Panc1 (cell line): ENCODE measurements at regions of chr7 and their contacts with region 1.

Region 1: DNA sequence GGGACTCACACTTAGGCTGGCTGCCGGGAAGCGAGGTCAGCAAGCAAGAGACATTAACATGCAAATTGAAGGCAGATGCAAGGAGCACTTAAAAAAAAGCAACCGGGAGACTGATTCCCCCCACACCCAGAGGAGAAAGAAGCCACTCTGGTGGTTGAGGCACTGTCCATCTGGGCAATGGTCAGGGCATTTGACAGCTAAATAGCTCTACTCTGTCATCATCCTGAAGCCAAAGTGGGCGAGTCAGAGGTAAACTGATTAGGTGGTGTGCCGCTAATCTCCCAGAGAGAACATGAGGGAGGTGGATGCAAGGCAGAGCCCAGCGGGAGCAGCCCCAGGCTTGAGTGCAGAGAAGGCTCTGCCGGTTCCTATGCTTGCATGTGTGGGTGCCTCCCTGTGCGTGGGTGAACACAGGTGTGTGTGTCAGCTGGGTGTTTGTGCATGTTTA is 100.6 kb downstream of the PLXNA4 start:
- DNase-seq: no peak
- ATAC-seq: no peak
- H3K4me3 ChIP-seq: no peak overlapping the region
- H3K27ac ChIP-seq: no peak overlapping the region
- H3K4me1 ChIP-seq: no peaks in the 10 kb centered on the region
- H3K27me3 ChIP-seq: peaks cover 23% of the 10 kb centered on the region
- CTCF ChIP-seq: no peak

Region 2: GRCh38 chr7:132494474-132494873 is 18.8 kb after region 1 on chr7:
- CTCF ChIA-PET with region 1: interaction called, 3 read pairs
- POLR2A ChIA-PET with region 1: interaction called, 12 read pairs
- in situ Hi-C with region 1: no loop called
- intact Hi-C with region 1: no loop called
- DNase-seq: no peak
- ATAC-seq: no peak
- H3K4me3 ChIP-seq: no peak overlapping the region
- H3K27ac ChIP-seq: no peak overlapping the region
- H3K4me1 ChIP-seq: no peaks in the 10 kb centered on the region
- H3K27me3 ChIP-seq: peaks cover 5% of the 10 kb centered on the region; the same call in 1 of the 2 replicates
- CTCF ChIP-seq: no peak